ENCODE measurements at regions of chr13 and their contacts with region 1.

Region 1: GRCh38 chr13:97109841-97110492 is 112.2 kb upstream of the MBNL2 start:
- H3K4me3 ChIP-seq: no peak overlapping the region
- H3K27ac ChIP-seq: no peak overlapping the region
- H3K4me1 ChIP-seq: no peaks in the 10 kb centered on the region; the same call in 1 of the 2 replicates
- CTCF ChIP-seq: no peak; the same call in 1 of the 2 replicates

Region 2: GRCh38 chr13:96925916-96926628 is 183.9 kb before region 1 on chr13:
- CTCF ChIA-PET with region 1: no interaction called
- POLR2A ChIA-PET with region 1: no interaction called
- H3K4me3 ChIP-seq: no peak overlapping the region
- H3K27ac ChIP-seq: no peak overlapping the region
- H3K4me1 ChIP-seq: no peaks in the 10 kb centered on the region
- CTCF ChIP-seq: no peak

Region 3: GRCh38 chr13:97141564-97142005 is 31.6 kb after region 1 on chr13:
- CTCF ChIA-PET with region 1: interaction called, 8 read pairs
- POLR2A ChIA-PET with region 1: interaction called, 12 read pairs
- H3K4me3 ChIP-seq: no peak overlapping the region; the same call in none of the 2 replicates
- H3K27ac ChIP-seq: no peak overlapping the region
- H3K4me1 ChIP-seq: 0 out of 2 replicates have a peak, but pooled peaks cover 2% of the 10 kb centered on the region
- CTCF ChIP-seq: no peak

Region 4: GRCh38 chr13:97212601-97213040 is 102.7 kb after region 1 on chr13:
- CTCF ChIA-PET with region 1: interaction called, 58 read pairs
- POLR2A ChIA-PET with region 1: no interaction called
- H3K4me3 ChIP-seq: no peak overlapping the region
- H3K27ac ChIP-seq: no peak overlapping the region
- H3K4me1 ChIP-seq: no peaks in the 10 kb centered on the region; the same call in 1 of the 2 replicates
- CTCF ChIP-seq: no peak

Region 5: DNA sequence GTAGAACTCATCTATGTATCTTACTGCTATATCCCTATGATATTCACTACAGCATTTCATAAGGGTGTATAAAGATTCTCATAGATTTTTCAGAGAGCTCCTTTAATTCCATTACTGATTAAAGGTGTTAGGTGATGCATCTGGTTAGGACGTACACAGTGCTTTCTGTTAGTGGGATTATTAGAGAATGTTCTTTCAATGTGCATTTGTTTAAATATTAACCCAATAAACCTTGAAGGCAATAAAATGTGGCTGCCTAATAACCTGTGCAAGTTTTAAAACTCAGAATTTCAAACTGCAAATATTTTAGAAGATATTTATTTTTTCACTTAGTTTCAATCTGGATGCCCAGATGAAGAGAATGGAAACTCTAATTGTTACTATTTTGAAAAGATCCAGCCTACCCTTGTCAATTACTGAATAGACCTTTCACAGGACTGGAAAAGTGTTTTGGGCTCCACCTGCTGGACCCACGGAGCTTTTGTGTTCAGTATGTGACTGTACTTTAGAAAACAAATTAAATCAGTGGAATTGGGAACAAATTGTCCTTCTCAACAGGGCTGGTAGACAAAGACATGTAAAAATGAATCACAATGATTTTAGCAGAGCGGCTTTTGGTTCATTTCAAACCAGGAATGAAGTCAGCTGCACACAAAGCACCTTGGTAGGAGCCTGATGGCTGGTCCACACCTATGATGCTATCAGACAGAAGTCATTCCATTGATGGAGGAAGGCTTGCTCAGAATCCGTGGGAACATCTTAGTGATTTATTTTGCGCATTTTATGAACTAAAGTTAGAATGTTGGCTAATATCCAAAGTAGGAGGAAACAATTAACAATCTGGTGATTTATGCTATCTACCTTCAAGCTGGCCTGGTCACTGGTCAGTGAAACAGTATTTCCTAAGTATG is 234.6 kb after region 1 on chr13:
- CTCF ChIA-PET with region 1: interaction called, 24 read pairs
- POLR2A ChIA-PET with region 1: no interaction called
- H3K4me3 ChIP-seq: no peak overlapping the region
- H3K27ac ChIP-seq: no peak overlapping the region
- H3K4me1 ChIP-seq: 0 out of 2 replicates have a peak, but pooled peaks cover 2% of the 10 kb centered on the region
- CTCF ChIP-seq: no peak